ENCODE measurements at regions of chr14 and their contacts with region 1.

Region 1: DNA sequence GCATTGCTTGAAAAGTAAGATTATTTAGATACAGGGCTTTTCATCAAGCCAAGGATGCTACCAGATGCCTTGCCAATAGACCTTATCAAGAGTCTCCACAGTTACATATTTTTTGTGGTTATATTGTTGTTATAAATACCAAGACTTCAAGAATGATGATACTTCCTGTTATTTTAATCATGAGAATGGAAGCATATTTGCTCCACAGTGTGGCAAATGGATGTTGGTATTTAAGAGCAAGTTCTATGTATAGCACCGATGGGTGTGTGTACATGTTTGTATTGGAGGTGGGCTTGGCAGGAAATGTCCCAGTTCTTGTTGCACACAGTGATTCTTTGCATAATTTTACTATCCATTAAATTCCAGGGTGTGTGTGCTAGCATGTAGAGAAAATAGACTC is 4.4 kb upstream of the NID2 start:
- DNase-seq: no peak
- H3K4me3 Mint-ChIP-seq: no peak overlapping the region
- H3K27ac Mint-ChIP-seq: no peak overlapping the region
- H3K4me1 Mint-ChIP-seq: peaks cover 7% of the 10 kb centered on the region
- H3K27me3 Mint-ChIP-seq: peaks cover 54% of the 10 kb centered on the region
- CTCF ChIP-seq: no peak

Region 2: DNA sequence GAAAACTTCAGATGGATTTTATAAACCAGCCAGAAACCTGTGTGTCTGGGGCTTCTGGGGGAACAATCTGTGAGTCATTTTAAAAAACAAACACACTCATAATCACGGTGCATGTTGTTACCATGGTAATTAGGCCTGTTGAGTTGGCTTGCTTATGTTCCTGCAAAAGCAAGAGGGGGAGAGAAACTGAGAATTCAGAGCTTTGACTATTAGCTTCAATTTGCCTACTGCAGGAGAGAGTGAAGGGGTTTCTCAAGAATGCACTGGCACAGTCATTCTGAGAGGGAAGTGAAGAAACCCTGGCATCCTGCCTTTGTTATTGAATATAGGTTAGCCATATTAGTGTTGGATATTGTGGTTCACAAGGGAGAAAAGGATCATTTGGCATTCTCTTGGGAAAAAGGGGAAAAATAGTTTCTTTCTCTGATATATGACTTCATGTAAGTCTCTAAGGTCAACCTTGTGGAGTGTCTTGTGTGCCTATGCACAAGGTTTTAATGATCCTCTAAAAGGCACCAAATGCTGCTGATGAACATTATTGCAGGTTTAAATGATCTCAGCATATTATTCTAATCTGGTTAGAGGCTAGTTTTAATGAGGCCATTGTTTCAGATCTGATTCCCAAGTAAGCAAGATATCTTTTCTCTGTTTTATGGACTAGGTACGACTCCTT is 199.9 kb before region 1 on chr14:
- CTCF ChIA-PET with region 1: no interaction called
- intact Hi-C with region 1: no loop called
- DNase-seq: peak; percentile 34
- H3K4me3 Mint-ChIP-seq: no peak overlapping the region
- H3K27ac Mint-ChIP-seq: peak overlapping the region; percentile 75
- H3K4me1 Mint-ChIP-seq: peaks cover 9% of the 10 kb centered on the region
- H3K27me3 Mint-ChIP-seq: no peaks in the 10 kb centered on the region
- CTCF ChIP-seq: no peak

Region 3: DNA sequence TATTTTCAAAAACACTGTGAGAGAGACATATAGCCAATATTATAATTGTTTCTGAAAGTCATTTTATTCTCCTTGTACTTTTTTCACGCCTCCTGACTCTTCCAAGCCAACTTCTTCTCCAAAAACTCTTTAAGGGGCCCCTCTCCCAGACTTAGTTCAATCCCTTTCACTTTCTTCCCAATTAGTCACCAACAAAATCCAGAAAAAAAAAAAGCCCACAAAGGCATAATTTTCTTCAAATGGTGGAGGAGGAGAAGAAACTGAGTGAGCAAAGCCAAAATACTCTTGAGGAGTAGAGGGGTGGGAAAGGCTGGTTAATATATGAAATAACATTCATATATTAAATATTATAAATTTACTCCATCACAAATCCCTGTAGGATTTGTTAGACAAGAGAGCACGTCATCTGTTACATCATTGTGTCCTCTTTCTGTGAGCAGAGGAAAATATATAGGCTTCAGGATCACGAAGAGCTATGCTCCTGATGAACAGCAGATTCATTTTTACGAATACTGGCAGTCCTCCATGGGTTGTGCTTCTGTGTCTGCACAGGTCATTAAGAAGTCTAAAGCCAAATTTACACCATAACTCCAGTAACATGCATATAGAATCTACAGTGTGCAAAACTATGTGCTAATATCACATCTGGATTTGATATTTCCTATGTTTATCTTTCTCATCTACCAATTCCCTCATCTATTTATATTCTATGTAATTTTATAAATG is 21.5 kb after region 1 on chr14:
- CTCF ChIA-PET with region 1: interaction called, 10 read pairs
- intact Hi-C with region 1: no loop called
- DNase-seq: no peak
- H3K4me3 Mint-ChIP-seq: no peak overlapping the region
- H3K27ac Mint-ChIP-seq: no peak overlapping the region
- H3K4me1 Mint-ChIP-seq: no peaks in the 10 kb centered on the region
- H3K27me3 Mint-ChIP-seq: peaks cover 70% of the 10 kb centered on the region
- CTCF ChIP-seq: no peak

Region 4: GRCh38 chr14:52189330-52189729 is 116.1 kb after region 1 on chr14:
- CTCF ChIA-PET with region 1: no interaction called
- intact Hi-C with region 1: no loop called
- DNase-seq: no peak
- H3K4me3 Mint-ChIP-seq: no peak overlapping the region
- H3K27ac Mint-ChIP-seq: no peak overlapping the region
- H3K4me1 Mint-ChIP-seq: peaks cover 14% of the 10 kb centered on the region
- H3K27me3 Mint-ChIP-seq: no peaks in the 10 kb centered on the region
- CTCF ChIP-seq: no peak

Measured in Calu3 (cell line).